Right cardiac atrium (tissue), 5 donors: ENCODE measurements at regions of chr17 and their contacts with region 1.

Region 1: DNA sequence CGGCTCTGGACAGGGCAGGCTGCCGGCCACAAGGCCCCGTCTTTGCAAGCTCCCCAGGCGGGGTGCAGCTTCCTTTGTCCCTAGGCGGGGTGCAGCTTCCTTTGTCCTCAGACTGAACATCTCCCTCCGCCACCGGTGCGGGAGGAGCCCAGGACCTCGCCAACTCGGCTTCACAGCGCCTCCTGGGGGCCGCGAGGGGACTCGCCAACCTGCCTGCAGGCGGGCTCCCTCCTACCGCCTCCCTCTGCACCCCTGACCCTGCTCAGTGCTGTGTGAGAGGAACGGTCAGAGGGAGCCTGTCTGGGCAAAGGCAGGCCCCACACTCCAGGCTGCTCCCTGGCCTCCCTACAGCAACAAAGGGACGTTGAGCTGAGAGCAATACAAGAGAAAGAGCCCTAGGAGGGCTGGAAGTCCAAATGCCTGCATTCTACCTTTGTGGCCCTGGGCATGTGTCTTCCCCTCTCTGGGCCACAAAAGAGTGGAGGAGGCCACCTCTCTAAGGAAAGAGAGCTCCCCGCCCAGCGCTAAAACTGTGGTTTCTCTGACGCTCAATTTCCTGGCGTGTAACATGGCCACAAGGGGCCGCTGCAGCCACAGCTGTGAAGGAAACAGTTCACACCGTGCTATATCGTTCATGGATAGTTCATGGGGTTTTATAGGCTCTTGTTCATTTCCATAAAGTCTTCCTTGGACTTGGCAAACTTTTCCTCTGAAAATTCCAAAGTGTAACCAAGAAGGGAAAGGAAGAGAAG is 20.9 kb upstream of the KRT19 start:
- DNase-seq: peak; percentile 78 to 94 (median 92)
- ATAC-seq: peak; percentile 88 to 89
- H3K4me3 ChIP-seq: no peak overlapping the region
- H3K27ac ChIP-seq: no peak overlapping the region
- H3K4me1 ChIP-seq: no peaks in the 10 kb centered on the region
- H3K27me3 ChIP-seq: no peaks in the 10 kb centered on the region

Region 2: GRCh38 chr17:40854159-40854814 is 694.7 kb before region 1 on chr17:
- intact Hi-C with region 1: no loop called
- DNase-seq: no peak
- ATAC-seq: peak in 1 of 2 donors; percentile 47
- H3K4me3 ChIP-seq: no peak overlapping the region
- H3K27ac ChIP-seq: no peak overlapping the region
- H3K4me1 ChIP-seq: no peaks in the 10 kb centered on the region
- H3K27me3 ChIP-seq: no peaks in the 10 kb centered on the region

Region 3: GRCh38 chr17:40909351-40909750 is 639.7 kb before region 1 on chr17:
- intact Hi-C with region 1: loop called in 3 of 4 experiments (anchors 5 to 10 kb)
- DNase-seq: peak; percentile 70 to 84 (median 78)
- ATAC-seq: peak; percentile 94 to 96
- H3K4me3 ChIP-seq: no peak overlapping the region
- H3K27ac ChIP-seq: no peak overlapping the region
- H3K4me1 ChIP-seq: no peaks in the 10 kb centered on the region
- H3K27me3 ChIP-seq: no peaks in the 10 kb centered on the region

Region 4: DNA sequence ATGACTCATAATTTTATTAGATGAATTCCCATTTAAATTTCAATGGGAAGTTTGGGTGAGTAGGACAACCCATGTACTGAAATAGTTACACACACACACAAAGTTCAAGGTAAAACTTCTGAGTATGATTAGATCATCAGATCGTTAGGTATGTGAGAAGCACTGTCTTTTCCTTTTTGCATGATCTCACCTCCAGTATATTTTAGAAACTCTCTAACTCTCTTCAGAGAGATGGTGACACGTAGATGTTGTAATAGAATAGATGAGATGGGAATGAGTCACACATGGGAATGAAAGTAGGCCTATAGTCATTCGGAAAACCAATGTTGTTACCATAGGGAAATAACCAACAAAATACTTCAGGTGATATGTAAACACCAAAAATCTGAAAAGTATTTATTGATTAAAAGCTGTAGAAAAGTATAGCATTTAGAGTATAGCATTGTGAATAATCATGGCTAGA is 633.8 kb before region 1 on chr17:
- intact Hi-C with region 1: loop called in 1 of 4 experiments (anchors 10 kb)
- DNase-seq: no peak
- ATAC-seq: no peak
- H3K4me3 ChIP-seq: no peak overlapping the region
- H3K27ac ChIP-seq: no peak overlapping the region
- H3K4me1 ChIP-seq: no peaks in the 10 kb centered on the region
- H3K27me3 ChIP-seq: no peaks in the 10 kb centered on the region

Region 5: GRCh38 chr17:41602524-41602923 is 53.5 kb after region 1 on chr17:
- intact Hi-C with region 1: no loop called
- DNase-seq: no peak
- ATAC-seq: no peak
- H3K4me3 ChIP-seq: no peak overlapping the region
- H3K27ac ChIP-seq: no peak overlapping the region
- H3K4me1 ChIP-seq: no peaks in the 10 kb centered on the region
- H3K27me3 ChIP-seq: no peaks in the 10 kb centered on the region

Region 6: DNA sequence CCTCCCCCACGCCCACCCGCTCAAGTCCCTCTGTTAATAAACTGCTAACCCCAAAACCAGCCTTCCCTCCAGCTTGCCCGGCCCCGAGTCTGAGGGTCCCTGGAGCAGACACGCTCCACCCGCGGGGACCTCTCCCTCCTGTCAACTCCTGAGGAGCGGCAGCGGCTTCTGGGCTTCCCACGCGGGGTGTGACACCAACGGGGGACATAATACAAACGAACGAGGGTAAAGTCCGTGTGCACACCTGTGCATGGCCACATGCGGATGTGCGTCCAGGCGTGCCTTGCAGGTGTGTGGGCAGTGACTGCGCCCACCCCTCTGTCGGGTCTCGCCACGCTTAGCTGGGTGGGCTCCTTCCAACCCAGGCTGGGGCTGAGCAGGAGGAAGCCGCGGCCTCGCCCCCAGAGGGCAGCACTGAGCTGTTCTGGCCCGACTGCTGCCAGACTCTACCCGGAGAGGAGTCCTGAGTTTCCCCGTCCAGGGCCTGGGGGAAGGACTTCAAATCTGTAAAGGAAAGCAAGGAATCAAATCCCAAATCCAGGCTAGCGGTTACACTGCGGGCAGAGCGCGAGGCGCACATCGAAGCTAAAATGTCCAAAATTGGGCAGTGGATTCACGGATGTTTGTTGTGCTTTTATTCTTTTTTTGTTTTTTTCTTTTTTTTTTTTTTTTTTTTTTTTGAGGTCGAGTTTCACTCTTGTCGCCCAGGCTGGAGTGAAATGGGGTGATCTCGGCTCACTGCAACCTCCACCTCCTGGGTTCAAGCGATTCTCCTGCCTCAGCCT is 99.6 kb after region 1 on chr17:
- intact Hi-C with region 1: loop called in 3 of 4 experiments (anchors 2 to 5 kb)
- DNase-seq: peak; percentile 86 to 95 (median 94)
- ATAC-seq: peak; percentile 94 to 96
- H3K4me3 ChIP-seq: no peak overlapping the region
- H3K27ac ChIP-seq: no peak overlapping the region
- H3K4me1 ChIP-seq: peaks cover 3% of the 10 kb centered on the region
- H3K27me3 ChIP-seq: no peaks in the 10 kb centered on the region

Region 7: DNA sequence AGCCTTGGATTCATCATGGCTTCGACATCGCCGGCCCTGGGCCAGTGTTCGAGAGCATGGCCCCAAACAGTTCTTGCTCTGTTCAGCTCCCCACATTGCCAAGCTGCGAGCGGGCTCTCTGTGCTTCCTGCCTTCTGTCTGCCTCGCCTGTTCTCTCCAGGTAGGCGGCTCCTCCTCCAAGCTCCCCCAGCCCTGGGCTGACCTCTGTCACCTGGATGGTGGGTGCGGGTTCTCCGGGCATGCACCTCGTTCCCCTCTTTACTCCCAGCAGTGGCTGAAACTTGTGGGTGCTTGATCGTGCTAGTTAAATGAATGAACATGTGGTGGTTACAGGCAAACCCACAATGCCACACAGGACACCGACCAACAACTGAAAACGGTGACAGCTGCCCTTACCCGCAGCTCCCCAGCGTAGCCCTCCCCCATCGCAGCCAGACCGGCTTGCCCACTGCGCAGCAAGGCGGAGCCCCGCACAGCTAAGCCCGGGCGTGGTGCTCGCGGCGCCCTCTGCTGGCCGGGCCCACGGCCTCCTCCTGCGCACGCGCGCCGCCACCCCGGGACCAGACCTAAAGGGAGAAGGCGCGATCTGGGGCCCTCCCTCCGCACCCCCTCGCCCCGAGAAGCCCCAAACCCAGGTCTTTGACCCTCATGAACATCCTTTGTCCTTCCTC is 116.7 kb after region 1 on chr17:
- intact Hi-C with region 1: loop called in 3 of 4 experiments (anchors 5 kb)
- DNase-seq: peak; percentile 88 to 96 (median 96)
- ATAC-seq: peak; percentile 95 to 96
- H3K4me3 ChIP-seq: peak overlapping the region; percentile 49
- H3K27ac ChIP-seq: peak overlapping the region; percentile 59
- H3K4me1 ChIP-seq: no peaks in the 10 kb centered on the region
- H3K27me3 ChIP-seq: no peaks in the 10 kb centered on the region

Region 8: GRCh38 chr17:42019509-42020404 is 470.7 kb after region 1 on chr17 and contains the start of gene NKIRAS2:
- intact Hi-C with region 1: no loop called
- DNase-seq: peak; percentile 96 to 98 (median 98)
- ATAC-seq: peak; percentile 80 to 85
- H3K4me3 ChIP-seq: peak within 1 kb of the TSS; percentile 83
- H3K27ac ChIP-seq: peak within 1 kb of the TSS; percentile 49
- H3K4me1 ChIP-seq: no peaks in the 10 kb centered on the region
- H3K27me3 ChIP-seq: no peaks in the 10 kb centered on the region
- total RNA-seq, gene NKIRAS2: 39.1 to 47.9 (median 40.4) TPM